MCF 10A (cell line): ENCODE measurements at regions of chr6 and their contacts with region 1.

Region 1: GRCh38 chr6:138517635-138518034 is 18.3 kb upstream of the NHSL1 start:
- DNase-seq: peak; percentile 54
- H3K4me3 Mint-ChIP-seq: no peak overlapping the region
- H3K27ac Mint-ChIP-seq: no peak overlapping the region
- H3K4me1 Mint-ChIP-seq: peaks cover 10% of the 10 kb centered on the region
- H3K27me3 Mint-ChIP-seq: no peaks in the 10 kb centered on the region
- CTCF ChIP-seq: peak; percentile 56

Region 2: GRCh38 chr6:138538390-138539031 is 20.9 kb after region 1 on chr6:
- CTCF ChIA-PET with region 1: interaction called, 10 read pairs
- POLR2A ChIA-PET with region 1: interaction called, 3 read pairs
- intact Hi-C with region 1: no loop called
- DNase-seq: no peak
- H3K4me3 Mint-ChIP-seq: no peak overlapping the region
- H3K27ac Mint-ChIP-seq: no peak overlapping the region
- H3K4me1 Mint-ChIP-seq: no peaks in the 10 kb centered on the region
- H3K27me3 Mint-ChIP-seq: no peaks in the 10 kb centered on the region
- CTCF ChIP-seq: no peak

Region 3: DNA sequence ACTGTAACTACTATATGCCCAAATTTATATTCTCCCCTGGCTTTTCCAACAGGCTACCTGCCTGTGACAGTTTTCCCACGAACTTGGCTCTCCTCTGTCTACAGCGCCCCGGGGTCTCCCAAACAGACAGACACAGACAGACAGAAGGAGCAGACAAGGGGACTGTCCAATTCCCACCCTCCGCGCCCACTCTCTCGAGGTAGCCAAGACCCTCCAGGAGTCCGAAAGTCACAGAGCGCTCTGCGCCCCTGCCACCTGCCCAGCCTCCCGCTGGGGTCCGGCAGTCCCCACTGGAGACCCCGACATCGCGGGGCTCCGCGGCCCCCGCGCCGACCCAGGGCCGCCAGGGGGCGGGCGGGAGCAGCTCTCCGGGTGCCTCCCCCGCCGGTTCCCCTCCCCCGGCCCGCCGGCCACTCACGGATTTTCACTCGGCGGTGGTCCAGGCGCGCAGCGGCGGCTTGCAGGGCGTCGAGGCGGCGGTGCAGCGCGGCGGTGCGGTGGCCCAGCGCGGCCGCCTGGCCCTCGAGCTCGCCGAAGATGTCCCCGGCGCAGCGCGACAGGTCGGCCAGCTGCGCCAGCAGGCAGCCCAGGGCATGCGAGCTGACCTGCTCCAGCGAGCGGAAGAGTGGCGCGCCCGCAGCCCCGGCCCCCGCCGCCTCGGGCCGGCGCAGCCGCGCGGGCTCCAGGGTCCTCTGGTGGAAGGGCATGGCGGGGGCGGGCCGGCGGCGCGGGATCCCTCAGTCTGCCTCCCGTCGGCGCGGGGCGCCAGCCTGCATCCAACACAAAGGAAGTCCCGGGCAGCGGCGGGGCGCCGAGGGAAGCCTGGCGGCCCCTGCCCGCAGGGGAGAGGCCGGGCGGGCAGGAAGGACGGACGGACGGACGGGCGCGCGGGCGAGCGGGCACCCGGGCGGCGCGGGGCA is 174.7 kb after region 1 on chr6:
- CTCF ChIA-PET with region 1: no interaction called
- POLR2A ChIA-PET with region 1: no interaction called
- intact Hi-C with region 1: no loop called
- DNase-seq: peak; percentile 57
- H3K4me3 Mint-ChIP-seq: peak overlapping the region; percentile 90
- H3K27ac Mint-ChIP-seq: peak overlapping the region; percentile 87
- H3K4me1 Mint-ChIP-seq: peaks cover 11% of the 10 kb centered on the region
- H3K27me3 Mint-ChIP-seq: no peaks in the 10 kb centered on the region
- CTCF ChIP-seq: peak; percentile 92

Region 4: GRCh38 chr6:138765896-138766655 is 248.4 kb after region 1 on chr6:
- CTCF ChIA-PET with region 1: interaction called, 5 read pairs
- POLR2A ChIA-PET with region 1: no interaction called
- intact Hi-C with region 1: loop called (anchors 5 kb)
- DNase-seq: peak; percentile 47
- H3K4me3 Mint-ChIP-seq: no peak overlapping the region
- H3K27ac Mint-ChIP-seq: no peak overlapping the region
- H3K4me1 Mint-ChIP-seq: no peaks in the 10 kb centered on the region
- H3K27me3 Mint-ChIP-seq: no peaks in the 10 kb centered on the region
- CTCF ChIP-seq: peak; percentile 43

Region 5: DNA sequence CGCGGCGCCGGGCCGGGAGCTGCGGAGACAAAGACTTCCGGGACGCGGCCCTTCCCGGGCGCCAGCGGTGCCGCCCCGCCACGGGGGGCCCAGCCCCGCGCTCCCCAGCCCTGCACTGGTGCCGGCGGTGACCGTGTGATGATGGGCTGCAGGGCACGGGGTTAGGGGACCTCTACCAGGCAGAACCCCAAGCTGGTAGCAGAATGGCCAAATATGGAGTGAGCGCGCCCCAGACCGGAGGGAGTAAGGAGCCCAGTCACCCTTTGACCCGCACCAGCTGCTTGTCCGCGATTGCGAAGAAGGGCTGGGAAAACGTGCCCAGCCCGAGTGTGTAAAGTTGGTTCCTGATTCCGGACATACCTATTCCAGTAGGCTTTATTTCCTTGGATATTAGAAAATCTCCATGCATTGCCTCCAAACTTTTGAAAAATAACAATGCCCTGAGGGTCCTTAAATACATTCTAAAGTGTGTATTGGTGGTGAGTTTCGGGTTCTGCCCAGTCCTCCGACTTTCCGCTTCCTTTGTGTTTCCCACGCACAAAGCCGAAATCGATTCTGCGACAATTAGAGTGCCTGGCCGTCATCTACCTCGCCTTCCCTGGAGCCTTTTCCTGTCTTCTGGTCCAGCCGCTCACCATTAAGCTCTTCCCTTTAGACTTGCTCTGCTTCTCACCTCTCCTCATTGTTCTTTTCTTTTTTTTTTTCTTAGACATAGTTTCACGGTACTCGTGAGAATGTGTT is 512.0 kb after region 1 on chr6:
- CTCF ChIA-PET with region 1: no interaction called
- POLR2A ChIA-PET with region 1: no interaction called
- intact Hi-C with region 1: no loop called
- DNase-seq: peak; percentile 41
- H3K4me3 Mint-ChIP-seq: no peak overlapping the region
- H3K27ac Mint-ChIP-seq: no peak overlapping the region
- H3K4me1 Mint-ChIP-seq: peaks cover 25% of the 10 kb centered on the region
- H3K27me3 Mint-ChIP-seq: no peaks in the 10 kb centered on the region
- CTCF ChIP-seq: no peak

Region 6: DNA sequence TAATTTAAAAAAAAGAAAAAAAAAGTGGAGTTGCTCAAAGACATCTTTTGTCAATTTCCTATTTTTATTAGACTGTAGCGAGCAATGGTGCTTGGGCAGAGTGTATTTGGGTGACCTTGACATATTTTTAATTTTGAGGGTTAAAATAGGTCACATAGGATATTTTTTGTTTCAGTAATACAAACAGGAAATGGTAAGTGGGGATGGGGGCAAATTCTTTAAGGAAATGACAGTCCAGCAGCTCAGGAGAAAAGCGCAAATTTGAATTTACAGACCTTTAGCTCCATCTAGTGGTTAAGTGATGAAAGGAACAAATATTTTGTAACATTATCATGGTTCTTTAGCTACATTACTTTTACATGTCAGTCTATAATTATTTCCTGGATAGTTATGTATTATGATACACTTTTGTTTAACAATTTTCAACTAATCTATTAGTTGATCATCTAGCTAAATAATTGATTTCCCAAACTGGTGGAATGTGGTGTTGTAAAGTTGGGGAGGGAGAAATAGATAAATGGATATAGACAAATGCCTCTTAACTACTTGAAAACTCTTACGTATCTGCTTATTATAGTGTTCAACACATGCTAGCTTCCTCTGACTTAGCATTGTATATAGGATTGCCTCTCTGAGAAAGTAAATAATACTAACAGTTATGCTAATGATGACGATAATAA is 846.8 kb after region 1 on chr6:
- CTCF ChIA-PET with region 1: no interaction called
- POLR2A ChIA-PET with region 1: no interaction called
- intact Hi-C with region 1: loop called (anchors 5 kb)
- DNase-seq: peak; percentile 53
- H3K4me3 Mint-ChIP-seq: no peak overlapping the region
- H3K27ac Mint-ChIP-seq: no peak overlapping the region
- H3K4me1 Mint-ChIP-seq: no peaks in the 10 kb centered on the region
- H3K27me3 Mint-ChIP-seq: no peaks in the 10 kb centered on the region
- CTCF ChIP-seq: peak; percentile 66